ENCODE measurements at regions of chr1 and their contacts with region 1.

Region 1: GRCh38 chr1:220089650-220090556 is at the start of gene BPNT1:
- DNase-seq: peak; percentile 97
- H3K4me3 ChIP-seq: peak within 1 kb of the TSS; percentile 44 to 82 (median 46)
- H3K27ac ChIP-seq: peak within 1 kb of the TSS; percentile 0
- H3K4me1 ChIP-seq: peaks cover 3% of the 10 kb centered on the region
- H3K27me3 ChIP-seq: no peaks in the 10 kb centered on the region
- CTCF ChIP-seq: no peak
- POLR2A ChIP-seq: peak; percentile 96
- total RNA-seq, gene BPNT1: 17.4 and 20.3 TPM in 2 replicates

Region 2: GRCh38 chr1:220001095-220001501 is 88.8 kb before region 1 on chr1:
- CTCF ChIA-PET with region 1: no interaction called
- POLR2A ChIA-PET with region 1: no interaction called
- dilution Hi-C with region 1: no loop called
- intact Hi-C with region 1: loop called (anchors 5 kb)
- DNase-seq: peak; percentile 76
- H3K4me3 ChIP-seq: peak overlapping the region in 1 of 3 experiments; percentile 1
- H3K27ac ChIP-seq: peak overlapping the region; percentile 79
- H3K4me1 ChIP-seq: peaks cover 21% of the 10 kb centered on the region
- H3K27me3 ChIP-seq: no peaks in the 10 kb centered on the region
- CTCF ChIP-seq: no peak
- POLR2A ChIP-seq: no peak

Region 3: GRCh38 chr1:220046052-220046930 is 43.6 kb before region 1 on chr1 and contains the start of gene EPRS1:
- CTCF ChIA-PET with region 1: no interaction called
- POLR2A ChIA-PET with region 1: no interaction called
- dilution Hi-C with region 1: no loop called
- intact Hi-C with region 1: loop called (anchors 1 kb)
- DNase-seq: peak; percentile 99
- H3K4me3 ChIP-seq: peak within 1 kb of the TSS; percentile 79 to 98 (median 86)
- H3K27ac ChIP-seq: peak within 1 kb of the TSS; percentile 1
- H3K4me1 ChIP-seq: peaks cover 10% of the 10 kb centered on the region
- H3K27me3 ChIP-seq: no peaks in the 10 kb centered on the region
- CTCF ChIP-seq: peak; percentile 61 to 86
- POLR2A ChIP-seq: peak; percentile 91
- total RNA-seq, gene EPRS1: 103 and 109 TPM in 2 replicates

Region 4: GRCh38 chr1:220137019-220137786 is 47.3 kb after region 1 on chr1:
- CTCF ChIA-PET with region 1: interaction called, 4 read pairs
- POLR2A ChIA-PET with region 1: no interaction called
- dilution Hi-C with region 1: no loop called
- intact Hi-C with region 1: loop called (anchors 1 kb)
- DNase-seq: peak; percentile 94
- H3K4me3 ChIP-seq: peak overlapping the region in 1 of 3 experiments; percentile 16
- H3K27ac ChIP-seq: peak overlapping the region; percentile 89
- H3K4me1 ChIP-seq: peaks cover 7% of the 10 kb centered on the region
- H3K27me3 ChIP-seq: no peaks in the 10 kb centered on the region
- CTCF ChIP-seq: no peak
- POLR2A ChIP-seq: no peak